ENCODE measurements at regions of chr3 and their contacts with region 1.

Region 1: DNA sequence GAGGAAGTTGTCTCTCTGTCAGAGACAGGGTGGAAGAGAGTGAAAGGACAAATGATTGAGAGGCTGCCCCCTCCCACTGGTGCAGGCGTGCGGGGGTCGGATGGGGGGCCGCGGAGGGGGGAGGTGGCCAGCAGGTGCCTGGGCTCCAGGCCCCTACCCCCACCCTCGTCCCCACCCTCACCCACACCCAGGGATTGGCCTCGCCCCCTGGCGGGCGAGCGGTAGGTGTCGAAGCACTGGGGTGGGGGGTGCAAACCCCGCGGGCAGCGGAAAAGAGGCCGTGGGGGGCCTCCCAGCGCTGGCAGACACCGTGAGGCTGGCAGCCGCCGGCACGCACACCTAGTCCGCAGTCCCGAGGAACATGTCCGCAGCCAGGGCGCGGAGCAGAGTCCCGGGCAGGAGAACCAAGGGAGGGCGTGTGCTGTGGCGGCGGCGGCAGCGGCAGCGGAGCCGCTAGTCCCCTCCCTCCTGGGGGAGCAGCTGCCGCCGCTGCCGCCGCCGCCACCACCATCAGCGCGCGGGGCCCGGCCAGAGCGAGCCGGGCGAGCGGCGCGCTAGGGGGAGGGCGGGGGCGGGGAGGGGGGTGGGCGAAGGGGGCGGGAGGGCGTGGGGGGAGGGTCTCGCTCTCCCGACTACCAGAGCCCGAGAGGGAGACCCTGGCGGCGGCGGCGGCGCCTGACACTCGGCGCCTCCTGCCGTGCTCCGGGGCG is at the start of gene KAT2B:
- DNase-seq: peak; percentile 85
- H3K4me3 ChIP-seq: peak within 1 kb of the TSS; percentile 73 to 95 (median 82)
- H3K27ac ChIP-seq: peak within 1 kb of the TSS; percentile 94 to 100 (median 99)
- H3K4me1 ChIP-seq: peaks cover 20 to 46% (median 38%) of the 10 kb centered on the region in 4 donors
- H3K27me3 ChIP-seq: no peaks in the 10 kb centered on the region
- CTCF ChIP-seq: peak; percentile 79 to 88 (median 81)
- EP300 ChIP-seq: no peak
- POLR2A ChIP-seq: peak; percentile 49
- total RNA-seq, gene KAT2B: 21.3 to 35.5 (median 30.2) TPM

Region 2: GRCh38 chr3:20141851-20142250 is 101.9 kb after region 1 on chr3:
- in situ Hi-C with region 1: no loop called
- intact Hi-C with region 1: loop called (anchors 10 kb)
- DNase-seq: no peak
- H3K4me3 ChIP-seq: no peak overlapping the region
- H3K27ac ChIP-seq: peak overlapping the region in 3 of 4 donors; percentile 26 to 38 (median 27)
- H3K4me1 ChIP-seq: no peaks in the 10 kb centered on the region
- H3K27me3 ChIP-seq: no peaks in the 10 kb centered on the region
- CTCF ChIP-seq: no peak
- EP300 ChIP-seq: no peak
- POLR2A ChIP-seq: no peak

Region 3: GRCh38 chr3:20185701-20186598 is 146.0 kb after region 1 on chr3 and contains the start of gene SGO1:
- in situ Hi-C with region 1: loop called in 2 of 4 experiments (anchors 25 kb)
- intact Hi-C with region 1: no loop called
- DNase-seq: peak; percentile 100
- H3K4me3 ChIP-seq: peak within 1 kb of the TSS; percentile 57 to 74 (median 66)
- H3K27ac ChIP-seq: peak within 1 kb of the TSS; percentile 88 to 97 (median 90)
- H3K4me1 ChIP-seq: peaks cover 0 to 21% (median 11%) of the 10 kb centered on the region in 4 donors
- H3K27me3 ChIP-seq: no peaks in the 10 kb centered on the region
- CTCF ChIP-seq: no peak
- EP300 ChIP-seq: no peak
- POLR2A ChIP-seq: peak; percentile 88
- total RNA-seq, gene SGO1: 0.79 to 26.5 (median 0.96) TPM in 3 of 4 donors, not detected in the other